Gastrocnemius medialis (tissue), 4 donors: ENCODE measurements at regions of chrX and their contacts with region 1.

Region 1: GRCh38 chrX:38985375-38985774 is 184.1 kb downstream of the MID1IP1 start:
- DNase-seq: no peak
- ATAC-seq: peak in 1 of 2 donors; percentile 53
- H3K4me3 ChIP-seq: no peak overlapping the region
- H3K27ac ChIP-seq: no peak overlapping the region
- H3K4me1 ChIP-seq: no peaks in the 10 kb centered on the region
- H3K27me3 ChIP-seq: no peaks in the 10 kb centered on the region
- CTCF ChIP-seq: peak in 2 of 5 experiments; percentile 11 to 19
- POLR2A ChIP-seq: no peak

Region 2: DNA sequence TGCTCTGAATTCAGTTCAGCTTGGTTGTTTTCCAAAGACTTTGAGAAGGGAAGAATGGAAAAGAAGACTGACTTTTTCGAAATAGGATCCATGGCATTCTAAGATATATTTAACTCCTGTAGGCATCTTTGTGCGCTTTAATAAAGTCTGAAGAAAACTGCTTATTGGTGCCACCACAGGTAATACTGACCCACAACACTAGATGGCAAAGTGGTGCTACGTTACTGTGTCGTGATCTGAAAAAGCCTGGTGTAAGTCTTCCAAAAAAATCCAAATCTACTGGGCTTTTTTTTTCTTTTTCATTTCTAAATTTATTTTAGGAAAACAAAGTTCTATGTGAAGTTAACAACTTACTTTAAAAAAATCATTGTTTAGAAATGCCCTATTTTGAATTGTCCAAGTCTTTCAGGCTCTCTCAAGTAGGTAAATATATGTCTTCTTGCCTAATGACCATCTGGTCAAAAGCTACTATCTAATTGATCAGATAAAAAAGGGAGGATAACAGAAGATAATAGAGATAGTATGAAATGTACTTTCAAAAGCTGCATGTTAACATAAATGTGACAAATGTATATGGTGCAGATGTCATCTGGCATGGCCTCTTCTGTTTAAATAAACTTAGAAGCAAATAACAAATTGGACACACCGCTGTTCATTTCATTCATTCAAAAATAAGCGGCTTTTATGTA is 231.1 kb before region 1 on chrX:
- in situ Hi-C with region 1: loop called in 2 of 4 experiments (anchors 25 kb)
- intact Hi-C with region 1: loop called (anchors 5 kb)
- DNase-seq: peak in 1 of 2 donors; percentile 12
- ATAC-seq: peak in 1 of 2 donors; percentile 64
- H3K4me3 ChIP-seq: no peak overlapping the region
- H3K27ac ChIP-seq: no peak overlapping the region
- H3K4me1 ChIP-seq: no peaks in the 10 kb centered on the region
- H3K27me3 ChIP-seq: no peaks in the 10 kb centered on the region
- CTCF ChIP-seq: peak; percentile 40 to 66 (median 53)
- POLR2A ChIP-seq: no peak

Region 3: DNA sequence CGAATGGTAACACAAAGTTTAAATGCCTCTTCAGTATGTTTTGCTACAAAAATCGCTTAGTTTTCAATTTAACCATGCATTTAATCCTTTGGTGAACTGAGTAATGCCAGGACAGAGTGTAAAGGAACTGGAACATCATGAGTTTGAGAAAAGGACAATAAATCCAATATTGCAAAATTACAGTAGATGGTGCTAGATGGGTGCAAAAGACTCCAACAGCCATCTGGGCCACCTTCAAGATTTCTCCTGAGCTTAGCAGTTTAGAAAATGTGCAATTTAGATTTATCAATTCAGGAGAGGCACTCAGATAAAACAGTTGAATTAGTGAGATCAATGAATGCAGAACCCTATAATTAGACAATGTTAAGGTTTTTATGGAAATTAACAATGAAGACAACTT is 217.3 kb before region 1 on chrX:
- in situ Hi-C with region 1: loop called in 2 of 4 experiments (anchors 25 kb)
- intact Hi-C with region 1: loop called (anchors 5 kb)
- DNase-seq: no peak
- ATAC-seq: peak in 1 of 2 donors; percentile 60
- H3K4me3 ChIP-seq: no peak overlapping the region
- H3K27ac ChIP-seq: no peak overlapping the region
- H3K4me1 ChIP-seq: no peaks in the 10 kb centered on the region
- H3K27me3 ChIP-seq: no peaks in the 10 kb centered on the region
- CTCF ChIP-seq: peak in 2 of 5 experiments; percentile 23 to 38
- POLR2A ChIP-seq: no peak

Region 4: GRCh38 chrX:38850807-38851544 is 134.4 kb before region 1 on chrX:
- in situ Hi-C with region 1: no loop called
- intact Hi-C with region 1: loop called (anchors 5 kb)
- DNase-seq: no peak
- ATAC-seq: peak; percentile 86
- H3K4me3 ChIP-seq: no peak overlapping the region
- H3K27ac ChIP-seq: peak overlapping the region; percentile 76 to 85 (median 79)
- H3K4me1 ChIP-seq: peaks cover 4 to 6% of the 10 kb centered on the region in 2 donors
- H3K27me3 ChIP-seq: no peaks in the 10 kb centered on the region
- CTCF ChIP-seq: no peak
- POLR2A ChIP-seq: no peak

Region 5: DNA sequence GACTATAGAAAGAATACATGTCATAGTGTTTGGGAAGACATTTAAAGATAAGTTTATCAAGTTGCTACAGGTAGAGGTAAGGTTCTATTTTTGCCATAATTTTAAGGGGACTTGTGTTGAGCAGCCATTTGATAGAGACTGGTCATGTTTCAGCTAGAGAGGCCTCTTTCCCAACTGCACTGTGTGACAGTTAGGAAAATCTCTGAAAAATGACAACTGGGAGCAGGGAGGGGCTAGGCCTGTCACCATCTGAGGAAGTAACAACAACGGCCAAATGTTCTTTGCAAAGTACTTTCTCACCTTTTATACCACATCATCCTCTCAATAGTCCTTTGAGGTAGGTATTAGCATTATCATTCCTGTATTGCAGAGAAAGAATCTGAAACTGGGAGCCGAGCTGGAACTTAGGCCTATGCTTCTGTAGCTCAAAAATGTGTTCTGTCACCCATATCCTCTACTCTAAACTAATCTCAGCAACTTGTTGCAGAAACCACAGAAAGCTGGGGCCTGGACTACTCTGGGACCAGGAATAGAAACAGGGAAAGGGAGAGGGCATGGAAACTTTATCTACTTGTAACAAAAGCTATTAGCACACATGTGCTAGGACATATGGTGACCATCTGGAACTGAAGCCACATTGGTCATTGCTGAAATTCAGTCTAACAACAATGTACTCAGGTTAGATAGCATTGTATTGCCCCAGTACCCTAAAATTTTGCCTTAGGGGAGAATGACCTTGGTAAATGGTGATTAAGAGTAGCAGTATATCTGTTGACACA is 14.8 kb after region 1 on chrX:
- in situ Hi-C with region 1: no loop called
- intact Hi-C with region 1: no loop called
- DNase-seq: peak; percentile 25 to 35
- ATAC-seq: peak; percentile 88 to 93
- H3K4me3 ChIP-seq: no peak overlapping the region
- H3K27ac ChIP-seq: peak overlapping the region; percentile 77 to 85 (median 80)
- H3K4me1 ChIP-seq: peaks cover 0 to 15% of the 10 kb centered on the region in 2 donors
- H3K27me3 ChIP-seq: no peaks in the 10 kb centered on the region
- CTCF ChIP-seq: no peak
- POLR2A ChIP-seq: no peak